ENCODE measurements at regions of chr14 and their contacts with region 1.

Region 1: DNA sequence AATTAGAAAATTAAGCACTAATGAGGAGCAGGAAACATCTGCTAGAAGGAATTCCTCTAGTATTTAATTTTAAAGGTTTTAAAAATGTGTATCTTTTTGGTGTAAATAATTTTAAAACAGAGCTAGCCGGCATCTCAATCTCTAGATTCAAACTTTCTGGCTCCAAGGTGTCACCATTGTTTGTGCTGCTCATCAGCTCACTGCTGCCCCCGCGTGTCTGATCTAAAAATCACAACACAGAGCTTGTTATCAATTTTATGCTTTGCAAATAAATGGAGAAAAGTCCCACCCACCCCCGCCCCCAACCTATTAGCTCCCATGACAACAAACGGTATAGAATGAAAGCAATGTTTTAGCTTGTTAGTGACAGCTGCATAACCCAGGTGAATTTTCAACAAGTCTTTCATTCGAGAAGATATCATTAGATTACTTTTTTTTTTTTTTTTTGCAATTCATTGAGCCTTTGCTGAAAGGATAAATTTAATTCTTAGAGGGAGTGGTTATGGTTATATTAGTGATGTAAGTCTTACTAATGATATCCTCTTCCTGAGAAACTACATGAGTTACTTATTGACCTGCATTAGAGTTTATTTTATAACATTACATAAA is 11.3 kb upstream of the ABHD12B start:
- DNase-seq: peak; percentile 61
- H3K4me3 ChIP-seq: peak overlapping the region; percentile 56
- H3K27ac ChIP-seq: no peak overlapping the region
- H3K27me3 ChIP-seq: no peaks in the 10 kb centered on the region
- CTCF ChIP-seq: peak; percentile 74

Region 2: GRCh38 chr14:50354527-50354926 is 506.1 kb before region 1 on chr14:
- CTCF ChIA-PET with region 1: no interaction called
- POLR2A ChIA-PET with region 1: no interaction called
- DNase-seq: no peak
- H3K4me3 ChIP-seq: no peak overlapping the region
- H3K27ac ChIP-seq: no peak overlapping the region
- H3K27me3 ChIP-seq: no peaks in the 10 kb centered on the region
- CTCF ChIP-seq: no peak

Region 3: DNA sequence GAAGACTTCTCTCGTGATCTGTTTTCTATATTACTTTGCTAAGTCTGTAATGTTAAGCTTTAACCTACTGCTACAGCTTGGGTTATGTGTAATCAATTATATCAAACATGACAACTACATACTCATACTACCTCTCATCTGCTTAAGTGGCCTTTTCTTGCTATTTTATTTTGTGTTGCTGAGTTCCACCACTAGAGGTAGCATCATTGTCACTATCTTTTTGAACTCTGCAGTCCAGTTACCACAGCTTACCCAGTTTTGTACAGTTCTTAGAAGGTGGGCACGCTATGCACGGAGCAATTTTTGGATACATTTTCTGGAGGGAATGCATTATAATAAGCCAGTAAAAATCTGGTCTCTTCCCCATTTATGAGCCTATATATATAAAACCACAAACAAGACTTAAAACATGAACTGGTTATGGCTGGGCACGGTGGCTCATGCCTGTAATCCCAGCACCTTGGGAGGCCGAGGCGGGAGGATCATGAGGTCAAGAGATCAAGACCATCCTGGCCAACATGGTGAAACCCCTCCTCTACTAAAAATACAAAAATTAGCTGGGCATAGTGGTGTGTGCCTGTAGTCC is 240.9 kb before region 1 on chr14:
- CTCF ChIA-PET with region 1: interaction called, 12 read pairs
- POLR2A ChIA-PET with region 1: no interaction called
- DNase-seq: no peak
- H3K4me3 ChIP-seq: no peak overlapping the region
- H3K27ac ChIP-seq: no peak overlapping the region
- H3K27me3 ChIP-seq: no peaks in the 10 kb centered on the region
- CTCF ChIP-seq: peak; percentile 71

Region 4: GRCh38 chr14:50647282-50647681 is 213.3 kb before region 1 on chr14:
- CTCF ChIA-PET with region 1: no interaction called
- POLR2A ChIA-PET with region 1: no interaction called
- DNase-seq: no peak
- H3K4me3 ChIP-seq: no peak overlapping the region
- H3K27ac ChIP-seq: no peak overlapping the region
- H3K27me3 ChIP-seq: no peaks in the 10 kb centered on the region
- CTCF ChIP-seq: no peak

Region 5: GRCh38 chr14:50785457-50786063 is 75.0 kb before region 1 on chr14:
- CTCF ChIA-PET with region 1: interaction called, 10 read pairs
- POLR2A ChIA-PET with region 1: no interaction called
- DNase-seq: no peak
- H3K4me3 ChIP-seq: no peak overlapping the region
- H3K27ac ChIP-seq: no peak overlapping the region
- H3K27me3 ChIP-seq: no peaks in the 10 kb centered on the region
- CTCF ChIP-seq: no peak

Region 6: GRCh38 chr14:50823051-50823761 is 37.4 kb before region 1 on chr14:
- CTCF ChIA-PET with region 1: interaction called, 14 read pairs
- POLR2A ChIA-PET with region 1: no interaction called
- DNase-seq: no peak
- H3K4me3 ChIP-seq: no peak overlapping the region
- H3K27ac ChIP-seq: no peak overlapping the region
- H3K27me3 ChIP-seq: no peaks in the 10 kb centered on the region
- CTCF ChIP-seq: no peak

Region 7: GRCh38 chr14:50875359-50876070 is 14.9 kb after region 1 on chr14:
- CTCF ChIA-PET with region 1: interaction called, 12 read pairs
- POLR2A ChIA-PET with region 1: no interaction called
- DNase-seq: no peak
- H3K4me3 ChIP-seq: no peak overlapping the region
- H3K27ac ChIP-seq: no peak overlapping the region
- H3K27me3 ChIP-seq: peaks cover 3% of the 10 kb centered on the region
- CTCF ChIP-seq: no peak

Measured in AG04450 (cell line).